ENCODE measurements at regions of chr5 and their contacts with region 1.

Region 1: GRCh38 chr5:176447982-176448608 is at the start of gene FAF2:
- DNase-seq: peak; percentile 100
- H3K4me3 Mint-ChIP-seq: peak within 1 kb of the TSS; percentile 92
- H3K27ac Mint-ChIP-seq: peak within 1 kb of the TSS; percentile 100
- H3K4me1 Mint-ChIP-seq: peaks cover 24% of the 10 kb centered on the region
- H3K27me3 Mint-ChIP-seq: no peaks in the 10 kb centered on the region
- CTCF ChIP-seq: peak; percentile 99
- total RNA-seq, gene FAF2: 78.3 and 97.2 TPM in 2 replicates

Region 2: DNA sequence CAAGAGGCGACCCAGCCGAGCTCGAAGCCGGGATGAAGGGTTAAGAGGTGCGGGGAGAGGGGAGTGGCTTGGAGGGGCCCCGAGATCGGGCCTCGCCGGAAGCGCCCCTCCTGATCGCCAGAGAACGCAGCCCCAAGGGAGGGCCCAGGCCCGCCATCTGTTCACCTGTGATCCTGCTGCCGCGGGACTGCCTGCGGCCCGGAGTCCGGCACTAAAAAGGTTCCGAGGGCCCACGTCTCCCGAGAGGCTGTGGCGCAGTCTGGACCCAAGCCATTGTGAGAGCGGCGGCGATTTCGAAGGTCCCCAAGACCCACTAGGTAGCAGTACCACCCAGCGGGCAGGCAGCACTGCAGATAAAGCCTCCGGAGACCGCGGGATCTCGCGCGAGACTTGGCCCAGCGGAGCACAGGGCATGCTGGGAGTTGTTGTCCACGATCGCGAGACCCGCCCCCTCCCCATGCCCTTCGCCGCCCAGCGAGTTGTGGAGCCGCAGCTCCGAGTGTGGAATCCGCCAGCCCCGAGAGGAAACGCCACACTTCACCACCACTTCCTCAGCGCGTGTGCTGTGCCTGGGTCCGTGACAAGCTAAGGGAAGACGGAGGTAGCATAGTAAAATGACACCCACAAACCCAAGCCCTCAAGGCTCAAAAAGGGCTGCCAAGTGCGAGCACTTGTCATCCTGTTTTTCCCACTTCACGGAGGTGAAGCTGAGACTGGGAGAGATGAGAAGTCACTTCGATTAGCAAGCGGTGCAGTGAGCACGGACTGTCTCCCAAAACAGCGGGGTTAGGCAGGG is 86.5 kb before region 1 on chr5 and contains the start of gene KIAA1191:
- CTCF ChIA-PET with region 1: interaction called, 3 read pairs
- POLR2A ChIA-PET with region 1: interaction called, 5 read pairs
- intact Hi-C with region 1: loop called (anchors 5 kb)
- DNase-seq: peak; percentile 94
- H3K4me3 Mint-ChIP-seq: peak within 1 kb of the TSS; percentile 98
- H3K27ac Mint-ChIP-seq: peak within 1 kb of the TSS; percentile 97
- H3K4me1 Mint-ChIP-seq: peaks cover 18% of the 10 kb centered on the region
- H3K27me3 Mint-ChIP-seq: no peaks in the 10 kb centered on the region
- CTCF ChIP-seq: peak; percentile 25
- total RNA-seq, gene KIAA1191: 83.8 and 92.0 TPM in 2 replicates

Region 3: DNA sequence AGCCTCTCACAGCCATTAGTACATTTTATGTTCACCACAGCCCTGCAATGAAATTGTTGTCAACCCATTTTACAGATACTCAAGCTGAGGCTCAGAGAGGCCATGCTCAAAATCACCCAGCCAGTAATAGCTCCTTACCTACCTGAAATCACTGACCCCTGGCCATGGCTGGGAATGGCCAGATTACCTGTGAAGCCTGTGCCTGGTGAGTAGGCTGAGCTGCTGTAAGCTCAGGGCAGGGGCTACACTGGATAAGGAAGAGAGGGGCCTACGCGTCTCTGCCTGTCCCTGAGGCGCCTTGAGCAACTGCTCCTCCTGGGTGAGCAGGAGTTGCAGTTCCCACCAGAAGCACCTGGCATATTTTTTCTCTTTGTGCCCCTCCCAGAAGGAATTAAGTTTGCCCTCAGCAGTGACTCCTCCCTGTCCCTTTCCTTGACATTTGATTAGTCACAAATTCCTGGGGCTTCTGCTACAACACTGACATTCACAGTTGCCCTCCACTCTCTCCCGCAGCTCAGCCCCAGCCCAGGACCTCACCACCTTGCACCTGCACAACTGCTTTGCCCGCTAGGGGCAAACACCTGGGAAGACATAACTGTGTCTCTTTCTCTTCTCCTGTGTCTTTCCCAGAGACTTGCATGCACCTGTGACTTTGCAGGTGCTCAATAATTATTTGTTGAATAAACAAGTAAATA is 37.5 kb before region 1 on chr5:
- CTCF ChIA-PET with region 1: interaction called, 83 read pairs
- POLR2A ChIA-PET with region 1: interaction called, 101 read pairs
- intact Hi-C with region 1: no loop called
- DNase-seq: peak; percentile 45
- H3K4me3 Mint-ChIP-seq: peak overlapping the region; percentile 83
- H3K27ac Mint-ChIP-seq: peak overlapping the region; percentile 73
- H3K4me1 Mint-ChIP-seq: peaks cover 58% of the 10 kb centered on the region
- H3K27me3 Mint-ChIP-seq: no peaks in the 10 kb centered on the region
- CTCF ChIP-seq: peak; percentile 17

Region 4: GRCh38 chr5:176436661-176437071 is 11.4 kb before region 1 on chr5:
- CTCF ChIA-PET with region 1: interaction called, 7 read pairs
- POLR2A ChIA-PET with region 1: interaction called, 13 read pairs
- intact Hi-C with region 1: no loop called
- DNase-seq: peak; percentile 19
- H3K4me3 Mint-ChIP-seq: peak overlapping the region; percentile 43
- H3K27ac Mint-ChIP-seq: no peak overlapping the region
- H3K4me1 Mint-ChIP-seq: peaks cover 13% of the 10 kb centered on the region
- H3K27me3 Mint-ChIP-seq: no peaks in the 10 kb centered on the region
- CTCF ChIP-seq: no peak

Region 5: GRCh38 chr5:176492431-176492830 is 44.3 kb after region 1 on chr5:
- CTCF ChIA-PET with region 1: interaction called, 4 read pairs
- POLR2A ChIA-PET with region 1: interaction called, 25 read pairs
- intact Hi-C with region 1: no loop called
- DNase-seq: peak; percentile 86
- H3K4me3 Mint-ChIP-seq: peak overlapping the region; percentile 17
- H3K27ac Mint-ChIP-seq: peak overlapping the region; percentile 63
- H3K4me1 Mint-ChIP-seq: peaks cover 30% of the 10 kb centered on the region
- H3K27me3 Mint-ChIP-seq: no peaks in the 10 kb centered on the region
- CTCF ChIP-seq: no peak

Region 6: DNA sequence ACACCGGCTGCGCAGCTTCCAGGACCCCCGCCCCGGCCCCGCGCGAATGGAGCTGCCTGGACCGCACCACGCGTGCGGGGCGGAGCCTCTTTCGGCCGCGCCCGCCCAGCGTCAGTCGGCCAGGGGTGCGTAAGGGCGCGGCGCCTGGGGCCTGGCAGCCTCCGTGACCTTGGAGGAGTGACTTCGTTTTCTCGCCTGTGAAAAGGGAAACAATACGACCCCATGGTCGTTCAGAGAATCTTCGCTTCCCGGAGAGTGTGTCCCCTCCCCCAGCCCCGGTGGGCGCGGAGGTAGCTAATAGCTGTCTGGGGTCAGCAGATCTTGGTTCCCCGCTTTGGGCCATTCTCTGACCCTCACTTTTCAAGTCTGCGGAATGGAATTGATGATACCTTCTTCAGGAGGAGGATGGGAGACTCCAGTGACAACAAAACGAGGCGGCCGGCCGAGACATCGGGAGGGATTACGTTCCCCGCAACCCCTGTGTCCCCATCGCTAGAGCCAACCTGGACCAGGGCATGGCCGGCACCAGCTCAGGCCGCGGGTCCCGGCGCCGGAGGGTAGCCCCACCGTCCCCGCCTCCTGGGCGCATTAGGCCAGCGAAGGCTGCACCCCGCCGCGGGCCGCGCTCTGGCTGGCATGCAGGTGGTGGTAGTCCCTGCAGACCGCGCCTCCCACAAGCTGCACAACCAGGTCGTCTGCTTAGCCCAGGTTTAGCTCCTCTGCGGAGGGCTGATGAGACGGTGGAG is 95.5 kb after region 1 on chr5:
- CTCF ChIA-PET with region 1: interaction called, 39 read pairs
- POLR2A ChIA-PET with region 1: interaction called, 128 read pairs
- intact Hi-C with region 1: no loop called
- DNase-seq: peak; percentile 75
- H3K4me3 Mint-ChIP-seq: peak overlapping the region; percentile 82
- H3K27ac Mint-ChIP-seq: peak overlapping the region; percentile 50
- H3K4me1 Mint-ChIP-seq: peaks cover 30% of the 10 kb centered on the region
- H3K27me3 Mint-ChIP-seq: no peaks in the 10 kb centered on the region
- CTCF ChIP-seq: no peak

Measured in MCF 10A (cell line).